CD8-positive, alpha-beta memory T cell (primary cell): ENCODE measurements at regions of chr14 and their contacts with region 1.

Region 1: GRCh38 chr14:20327005-20327869 is 5.8 kb downstream of the CCNB1IP1 start:
- DNase-seq: peak in 3 of 5 donors; percentile 6 to 67 (median 60)
- H3K4me3 ChIP-seq: no peak overlapping the region
- H3K4me3 Mint-ChIP-seq: peak overlapping the region in 2 of 7 donors; percentile 26 to 33
- H3K27ac ChIP-seq: no peak overlapping the region
- H3K27ac Mint-ChIP-seq: peak overlapping the region; percentile 16 to 92 (median 78)
- H3K4me1 ChIP-seq: peaks cover under 1% of the 10 kb centered on the region
- H3K4me1 Mint-ChIP-seq: peaks cover 22 to 39% (median 27%) of the 10 kb centered on the region in 3 donors
- H3K27me3 ChIP-seq: no peaks in the 10 kb centered on the region
- H3K27me3 Mint-ChIP-seq: no peaks in the 10 kb centered on the region

Region 2: GRCh38 chr14:20247646-20248246 is 79.5 kb before region 1 on chr14:
- CTCF ChIA-PET with region 1: no interaction called
- POLR2A ChIA-PET with region 1: no interaction called
- DNase-seq: no peak
- H3K4me3 ChIP-seq: no peak overlapping the region
- H3K4me3 Mint-ChIP-seq: no peak overlapping the region
- H3K27ac ChIP-seq: no peak overlapping the region
- H3K27ac Mint-ChIP-seq: no peak overlapping the region
- H3K4me1 ChIP-seq: no peaks in the 10 kb centered on the region
- H3K4me1 Mint-ChIP-seq: no peaks in the 10 kb centered on the region
- H3K27me3 ChIP-seq: no peaks in the 10 kb centered on the region
- H3K27me3 Mint-ChIP-seq: no peaks in the 10 kb centered on the region

Region 3: GRCh38 chr14:20461274-20462001 is 134.2 kb after region 1 on chr14 and contains the start of gene PIP4P1:
- CTCF ChIA-PET with region 1: interaction called, 11 read pairs
- POLR2A ChIA-PET with region 1: no interaction called
- DNase-seq: peak; percentile 98 to 99 (median 99)
- H3K4me3 ChIP-seq: peak within 1 kb of the TSS; percentile 78
- H3K4me3 Mint-ChIP-seq: peak within 1 kb of the TSS; percentile 86 to 95 (median 89)
- H3K27ac ChIP-seq: peak within 1 kb of the TSS; percentile 75
- H3K27ac Mint-ChIP-seq: peak within 1 kb of the TSS; percentile 91 to 98 (median 96)
- H3K4me1 ChIP-seq: peaks cover 28% of the 10 kb centered on the region
- H3K4me1 Mint-ChIP-seq: peaks cover 29 to 41% (median 34%) of the 10 kb centered on the region in 3 donors
- H3K27me3 ChIP-seq: no peaks in the 10 kb centered on the region
- H3K27me3 Mint-ChIP-seq: peaks cover 0 to 6% of the 10 kb centered on the region in 2 donors
- total RNA-seq, gene PIP4P1: 29.5 to 33.5 TPM

Region 4: GRCh38 chr14:20601482-20602080 is 274.3 kb after region 1 on chr14:
- CTCF ChIA-PET with region 1: interaction called, 144 read pairs
- POLR2A ChIA-PET with region 1: no interaction called
- DNase-seq: no peak
- H3K4me3 ChIP-seq: no peak overlapping the region
- H3K4me3 Mint-ChIP-seq: no peak overlapping the region
- H3K27ac ChIP-seq: no peak overlapping the region
- H3K27ac Mint-ChIP-seq: no peak overlapping the region
- H3K4me1 ChIP-seq: no peaks in the 10 kb centered on the region
- H3K4me1 Mint-ChIP-seq: no peaks in the 10 kb centered on the region
- H3K27me3 ChIP-seq: no peaks in the 10 kb centered on the region
- H3K27me3 Mint-ChIP-seq: peaks cover 1 to 10% of the 10 kb centered on the region in 2 donors